Posterior vena cava (tissue), 2 donors: ENCODE measurements at regions of chr4 and their contacts with region 1.

Region 1: GRCh38 chr4:188061083-188061482 is 48.3 kb downstream of the TRIML2 start:
- DNase-seq: no peak

Region 2: DNA sequence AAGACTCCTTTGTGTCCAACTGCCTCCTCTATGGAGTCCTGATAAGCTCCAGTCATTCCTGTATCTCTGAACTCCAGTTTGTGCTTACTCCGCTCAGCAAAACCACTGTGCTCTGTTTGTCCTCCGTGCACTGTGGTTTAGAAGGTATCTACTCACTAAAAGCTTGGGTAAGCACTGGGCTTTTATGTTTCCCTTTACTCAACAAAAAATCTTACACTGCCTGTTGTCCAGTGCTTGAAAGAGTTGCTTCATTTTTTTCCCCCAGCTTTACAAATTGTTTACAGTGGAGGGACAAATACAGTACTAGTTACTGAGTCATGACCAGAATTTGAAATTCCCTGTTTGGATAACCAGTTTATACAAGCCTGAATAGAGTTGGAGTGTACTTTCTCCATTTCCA is 792.1 kb before region 1 on chr4:
- intact Hi-C with region 1: no loop called
- DNase-seq: no peak

Region 3: DNA sequence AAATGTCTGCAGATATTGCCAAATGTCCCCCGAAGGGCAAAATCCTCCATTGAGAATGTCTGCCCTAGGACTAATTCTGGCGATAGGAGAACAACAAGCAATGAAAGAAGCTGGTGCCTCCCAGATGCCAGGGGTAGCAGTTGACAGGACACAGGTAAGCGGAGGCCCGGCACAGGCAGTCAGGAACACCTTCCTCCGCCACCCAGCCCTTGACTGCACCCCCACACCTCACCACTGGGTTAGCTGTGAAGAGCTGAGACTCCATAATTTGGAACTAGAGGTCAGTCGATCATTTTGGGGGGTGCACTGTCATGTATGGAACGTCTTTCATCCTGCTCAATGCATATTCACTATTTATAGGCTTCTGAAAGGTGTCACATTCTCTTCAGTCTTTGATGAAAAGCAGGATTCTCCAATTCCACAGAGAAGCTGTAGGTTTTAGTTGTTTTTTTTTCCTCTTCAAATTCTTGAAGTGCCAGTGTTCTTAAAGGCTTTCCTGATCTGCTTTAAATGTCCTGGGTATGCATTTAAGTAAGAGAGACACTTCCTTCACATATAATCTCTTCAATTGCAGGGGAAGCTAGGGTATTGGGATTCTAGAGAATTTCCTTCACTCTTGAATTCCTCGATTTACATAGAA is 177.1 kb before region 1 on chr4:
- intact Hi-C with region 1: loop called in 1 of 2 experiments (anchors 5 kb)
- DNase-seq: no peak